Activated CD8-positive, alpha-beta T cell treated with anti-CD3 and anti-CD28 coated beads, Interleukin-2, amount 10 ng/mL, durations not matched to agents 7 days and 5 days (primary cell): ENCODE measurements at regions of chr10 and their contacts with region 1.

Region 1: DNA sequence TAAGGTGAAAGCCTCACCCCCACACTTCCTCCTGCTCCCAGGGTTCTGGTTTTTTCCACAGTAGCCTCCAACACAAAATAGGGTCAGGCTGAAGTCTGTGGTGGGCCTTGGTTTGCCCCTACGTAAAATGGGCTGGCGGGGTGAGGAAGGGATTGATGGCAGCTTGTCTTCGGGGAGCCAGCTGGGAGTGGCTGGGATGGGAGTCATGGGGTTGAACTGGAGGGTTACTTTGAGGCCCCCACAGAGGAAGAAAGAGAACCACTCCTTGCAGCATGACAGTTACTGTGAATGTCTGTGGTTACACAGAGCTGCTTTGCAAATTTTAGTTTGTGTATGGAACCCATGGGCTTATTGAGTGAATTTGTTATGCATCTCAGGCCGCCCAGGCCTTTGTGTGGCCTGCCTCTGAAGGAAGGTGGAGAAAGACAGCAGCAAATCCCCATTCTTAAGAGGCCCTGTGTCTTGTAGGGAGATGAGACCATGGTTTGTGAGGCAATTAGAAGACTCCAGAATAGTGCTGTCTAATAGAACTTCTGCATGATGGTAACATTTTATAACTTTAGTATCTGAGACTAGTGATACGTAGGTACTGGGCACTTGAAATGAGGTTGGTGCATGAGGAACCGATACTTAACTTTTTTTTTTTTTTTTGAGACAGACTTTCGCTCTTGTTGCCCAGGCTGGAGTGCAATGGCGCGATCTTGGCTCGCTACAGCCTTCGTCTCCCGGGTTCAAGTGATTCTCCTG is 8.1 kb downstream of the TRIM8 start:
- DNase-seq: no peak
- ATAC-seq: peak; percentile 43
- H3K4me3 Mint-ChIP-seq: peak overlapping the region; percentile 65
- H3K27ac Mint-ChIP-seq: peak overlapping the region; percentile 92
- H3K4me1 Mint-ChIP-seq: peaks cover 75% of the 10 kb centered on the region
- H3K27me3 Mint-ChIP-seq: no peaks in the 10 kb centered on the region

Region 2: GRCh38 chr10:102627736-102628293 is 24.5 kb before region 1 on chr10:
- CTCF ChIA-PET with region 1: no interaction called
- POLR2A ChIA-PET with region 1: no interaction called
- DNase-seq: no peak
- ATAC-seq: no peak
- H3K4me3 Mint-ChIP-seq: no peak overlapping the region
- H3K27ac Mint-ChIP-seq: peak overlapping the region; percentile 63
- H3K4me1 Mint-ChIP-seq: peaks cover 17% of the 10 kb centered on the region
- H3K27me3 Mint-ChIP-seq: no peaks in the 10 kb centered on the region

Region 3: DNA sequence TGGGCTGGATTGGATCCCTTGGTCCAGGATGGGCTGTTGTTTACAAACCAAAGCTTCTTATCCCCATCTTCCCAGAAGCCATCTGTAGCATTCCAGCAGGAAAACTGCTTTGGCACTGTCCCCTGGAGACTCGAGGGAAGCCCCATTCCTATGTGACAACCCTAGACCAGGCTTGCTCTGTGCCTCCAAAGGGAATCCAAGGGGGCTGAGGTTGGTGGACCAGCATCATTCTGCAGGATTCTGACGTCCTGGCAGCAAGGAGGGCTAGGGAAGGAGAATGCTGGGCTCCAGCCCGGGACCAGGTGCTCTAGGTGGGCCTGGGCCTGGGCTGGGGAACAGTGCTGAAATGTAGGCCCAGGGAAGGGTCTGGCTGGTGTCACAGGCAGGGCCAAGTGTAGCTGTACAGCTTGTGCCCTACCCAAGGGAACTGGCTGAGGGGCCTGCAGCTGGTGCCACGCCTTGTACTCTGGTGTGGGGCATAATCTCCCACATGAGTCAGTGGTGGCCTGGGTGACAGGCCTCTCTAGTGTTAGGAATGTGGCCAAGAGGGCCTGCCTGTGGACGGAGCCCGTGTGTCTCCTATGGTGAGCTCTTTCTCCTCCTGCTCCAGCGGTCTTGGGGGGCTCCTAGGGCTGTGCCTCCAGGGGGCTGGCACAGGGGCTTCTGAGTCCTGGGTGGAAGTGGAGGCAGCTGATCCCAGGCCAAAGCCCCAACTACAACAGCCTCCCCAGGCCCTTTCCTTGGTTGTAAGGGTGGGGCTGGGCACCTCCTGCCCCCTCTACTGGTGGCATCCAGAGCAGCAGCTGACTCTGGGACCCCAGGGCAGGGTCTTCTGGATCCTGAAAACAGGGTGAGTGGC is 17.1 kb after region 1 on chr10:
- CTCF ChIA-PET with region 1: interaction called, 61 read pairs
- POLR2A ChIA-PET with region 1: interaction called, 35 read pairs
- DNase-seq: no peak
- ATAC-seq: no peak
- H3K4me3 Mint-ChIP-seq: no peak overlapping the region
- H3K27ac Mint-ChIP-seq: peak overlapping the region; percentile 55
- H3K4me1 Mint-ChIP-seq: peaks cover 40% of the 10 kb centered on the region
- H3K27me3 Mint-ChIP-seq: no peaks in the 10 kb centered on the region

Region 4: DNA sequence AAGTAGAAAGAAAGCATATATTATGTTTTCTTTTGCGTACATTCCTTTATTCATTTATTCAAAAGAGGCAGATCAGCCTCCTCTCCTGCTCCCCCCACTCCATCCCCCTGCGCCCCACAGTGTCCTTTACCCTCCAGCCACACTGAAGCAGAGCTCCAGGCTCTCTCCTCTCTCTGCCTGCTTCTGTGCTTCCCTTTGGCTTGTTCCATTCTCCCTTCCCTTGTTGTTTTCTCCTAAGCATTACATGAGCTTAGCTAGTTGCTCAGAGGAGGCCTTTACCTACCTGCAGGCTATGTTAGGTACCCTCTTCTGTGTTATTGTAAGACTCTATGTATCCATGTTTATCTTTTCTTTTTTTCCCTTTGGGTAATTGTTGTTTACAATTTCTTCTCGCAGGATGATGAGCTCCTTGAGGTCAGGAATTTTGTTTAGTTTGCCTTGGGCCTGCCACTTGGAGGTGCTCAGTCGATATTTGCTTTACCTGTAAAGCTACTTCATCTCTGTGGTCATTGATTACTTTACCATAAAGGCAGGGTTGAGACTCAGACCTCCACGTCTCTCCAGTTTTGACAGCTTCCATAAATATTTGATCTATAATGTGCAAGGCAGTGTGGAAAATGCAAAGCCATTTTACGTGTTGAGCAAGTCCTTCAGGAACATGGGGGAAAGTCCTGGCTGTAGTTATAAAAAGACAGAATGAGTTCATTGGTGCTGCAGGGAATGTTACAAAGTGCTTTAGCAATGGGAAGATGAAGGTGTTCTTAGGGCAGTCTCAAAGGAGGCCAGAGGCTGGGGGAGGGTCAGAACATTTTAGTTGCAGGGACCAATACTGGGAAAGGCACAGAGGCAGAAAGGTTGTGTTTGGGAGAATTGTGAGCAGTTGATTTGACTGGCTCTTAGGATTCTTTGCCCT is 293.4 kb after region 1 on chr10:
- CTCF ChIA-PET with region 1: no interaction called
- POLR2A ChIA-PET with region 1: no interaction called
- DNase-seq: no peak
- ATAC-seq: no peak
- H3K4me3 Mint-ChIP-seq: no peak overlapping the region
- H3K27ac Mint-ChIP-seq: no peak overlapping the region
- H3K4me1 Mint-ChIP-seq: no peaks in the 10 kb centered on the region
- H3K27me3 Mint-ChIP-seq: no peaks in the 10 kb centered on the region